Prostate gland (tissue), 2 donors: ENCODE measurements at regions of chr2 and their contacts with region 1.

Region 1: GRCh38 chr2:97645695-97646629 is at the start of gene COX5B:
- DNase-seq: peak; percentile 99
- H3K4me3 ChIP-seq: peak within 1 kb of the TSS; percentile 82 to 96
- H3K27ac ChIP-seq: peak within 1 kb of the TSS; percentile 92 to 95
- H3K4me1 ChIP-seq: no peaks in the 10 kb centered on the region
- H3K27me3 ChIP-seq: no peaks in the 10 kb centered on the region
- CTCF ChIP-seq: peak in 2 of 4 experiments; percentile 5 to 30
- POLR2A ChIP-seq: peak; percentile 84
- total RNA-seq, gene COX5B: 363 to 469 TPM

Region 2: GRCh38 chr2:97663965-97664635 is 18.1 kb after region 1 on chr2 and contains the start of gene ACTR1B:
- intact Hi-C with region 1: loop called (anchors 1 kb)
- DNase-seq: peak; percentile 98
- H3K4me3 ChIP-seq: peak within 1 kb of the TSS; percentile 69 to 82
- H3K27ac ChIP-seq: peak within 1 kb of the TSS; percentile 93 to 95
- H3K4me1 ChIP-seq: peaks cover 14% of the 10 kb centered on the region
- H3K27me3 ChIP-seq: no peaks in the 10 kb centered on the region
- CTCF ChIP-seq: peak in 3 of 4 experiments; percentile 31 to 69 (median 61)
- POLR2A ChIP-seq: peak; percentile 97
- total RNA-seq, gene ACTR1B: 80.5 to 102 TPM

Region 3: DNA sequence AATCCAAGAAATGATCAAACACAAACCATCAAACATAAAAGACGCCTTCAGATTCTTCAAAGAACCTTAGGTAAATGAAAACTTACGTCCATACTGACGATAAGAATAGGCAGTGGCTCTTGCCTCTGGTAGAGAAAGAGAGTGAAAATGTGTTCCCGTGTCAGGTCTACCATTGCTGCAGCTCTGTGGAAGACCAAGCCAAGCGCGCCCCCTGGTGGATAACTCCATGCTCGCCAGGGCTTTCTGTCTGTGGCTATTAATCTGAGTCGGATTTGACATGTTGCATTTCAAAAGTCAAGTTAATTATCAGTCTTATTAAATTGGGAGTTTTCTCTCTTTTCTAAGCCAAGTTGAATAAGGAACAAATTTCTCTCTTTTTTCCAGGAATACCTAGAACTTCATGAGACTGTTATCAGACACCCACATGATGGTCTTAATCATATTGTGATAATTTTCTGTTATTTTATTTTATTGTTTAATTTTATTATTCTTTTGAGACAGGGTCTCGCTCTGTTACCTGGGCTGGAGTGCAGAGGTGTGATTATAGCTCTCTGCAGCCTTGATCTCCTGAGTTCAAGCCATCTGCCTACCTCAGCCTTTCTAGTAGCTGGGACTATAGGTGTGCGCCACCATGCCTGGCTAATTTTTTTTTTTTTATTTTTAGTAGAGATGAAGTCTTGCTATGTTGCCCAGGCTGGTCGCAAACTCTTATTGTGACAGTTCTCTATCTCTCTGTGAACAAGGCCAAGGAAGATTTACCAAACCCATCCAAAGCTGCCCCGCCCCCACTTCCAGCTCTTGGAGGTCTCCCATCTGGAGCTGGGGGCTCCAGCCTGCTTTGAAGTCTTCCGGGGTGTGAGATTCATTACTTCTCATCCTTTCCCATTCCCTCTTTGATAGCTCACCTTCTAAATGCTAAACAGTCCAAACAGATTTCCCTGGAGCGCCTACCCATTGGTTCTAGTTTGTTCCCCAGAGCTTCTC is 51.6 kb after region 1 on chr2:
- intact Hi-C with region 1: loop called (anchors 10 kb)
- DNase-seq: peak; percentile 90
- H3K4me3 ChIP-seq: no peak overlapping the region
- H3K27ac ChIP-seq: no peak overlapping the region
- H3K4me1 ChIP-seq: no peaks in the 10 kb centered on the region
- H3K27me3 ChIP-seq: no peaks in the 10 kb centered on the region
- CTCF ChIP-seq: peak; percentile 91 to 98 (median 96)
- POLR2A ChIP-seq: no peak

Region 4: GRCh38 chr2:97935719-97936161 is 289.8 kb after region 1 on chr2:
- intact Hi-C with region 1: no loop called
- DNase-seq: no peak
- H3K4me3 ChIP-seq: no peak overlapping the region
- H3K27ac ChIP-seq: no peak overlapping the region
- H3K4me1 ChIP-seq: no peaks in the 10 kb centered on the region
- H3K27me3 ChIP-seq: no peaks in the 10 kb centered on the region
- CTCF ChIP-seq: no peak
- POLR2A ChIP-seq: no peak